ENCODE measurements at regions of chr5 and their contacts with region 1.

Region 1: GRCh38 chr5:142699184-142699720 is 13.4 kb upstream of the FGF1 start:
- DNase-seq: peak; percentile 66
- H3K4me3 ChIP-seq: no peak overlapping the region
- H3K27ac ChIP-seq: no peak overlapping the region
- H3K4me1 ChIP-seq: no peaks in the 10 kb centered on the region
- CTCF ChIP-seq: peak; percentile 94

Region 2: GRCh38 chr5:142151436-142152383 is 547.5 kb before region 1 on chr5:
- CTCF ChIA-PET with region 1: no interaction called
- POLR2A ChIA-PET with region 1: no interaction called
- intact Hi-C with region 1: loop called (anchors 1 kb)
- DNase-seq: peak; percentile 65
- H3K4me3 ChIP-seq: no peak overlapping the region
- H3K27ac ChIP-seq: peak overlapping the region; percentile 38
- H3K4me1 ChIP-seq: peaks cover 9% of the 10 kb centered on the region
- CTCF ChIP-seq: peak; percentile 100

Region 3: DNA sequence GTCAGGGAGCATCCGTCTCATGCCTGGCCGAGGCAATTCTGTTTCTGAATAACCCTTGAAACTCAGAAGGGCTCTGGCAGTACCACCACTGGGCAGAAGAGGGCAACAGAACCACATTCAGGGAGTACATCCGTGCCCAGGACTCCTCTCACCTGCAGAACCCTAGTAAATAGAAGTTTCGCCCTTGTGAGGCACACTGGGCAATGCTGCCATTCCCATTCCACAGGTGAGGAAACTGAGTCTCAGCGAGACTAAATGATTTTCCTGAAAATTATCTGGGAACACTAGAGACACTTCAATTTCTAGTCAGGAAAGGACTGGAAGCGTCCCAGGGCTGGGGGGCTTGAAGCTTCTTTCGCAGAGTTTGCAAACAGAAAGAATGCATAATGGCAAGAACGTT is 88.1 kb before region 1 on chr5:
- CTCF ChIA-PET with region 1: no interaction called
- POLR2A ChIA-PET with region 1: no interaction called
- intact Hi-C with region 1: loop called (anchors 1 kb)
- DNase-seq: peak; percentile 36
- H3K4me3 ChIP-seq: no peak overlapping the region
- H3K27ac ChIP-seq: no peak overlapping the region
- H3K4me1 ChIP-seq: no peaks in the 10 kb centered on the region
- CTCF ChIP-seq: peak; percentile 71

Region 4: DNA sequence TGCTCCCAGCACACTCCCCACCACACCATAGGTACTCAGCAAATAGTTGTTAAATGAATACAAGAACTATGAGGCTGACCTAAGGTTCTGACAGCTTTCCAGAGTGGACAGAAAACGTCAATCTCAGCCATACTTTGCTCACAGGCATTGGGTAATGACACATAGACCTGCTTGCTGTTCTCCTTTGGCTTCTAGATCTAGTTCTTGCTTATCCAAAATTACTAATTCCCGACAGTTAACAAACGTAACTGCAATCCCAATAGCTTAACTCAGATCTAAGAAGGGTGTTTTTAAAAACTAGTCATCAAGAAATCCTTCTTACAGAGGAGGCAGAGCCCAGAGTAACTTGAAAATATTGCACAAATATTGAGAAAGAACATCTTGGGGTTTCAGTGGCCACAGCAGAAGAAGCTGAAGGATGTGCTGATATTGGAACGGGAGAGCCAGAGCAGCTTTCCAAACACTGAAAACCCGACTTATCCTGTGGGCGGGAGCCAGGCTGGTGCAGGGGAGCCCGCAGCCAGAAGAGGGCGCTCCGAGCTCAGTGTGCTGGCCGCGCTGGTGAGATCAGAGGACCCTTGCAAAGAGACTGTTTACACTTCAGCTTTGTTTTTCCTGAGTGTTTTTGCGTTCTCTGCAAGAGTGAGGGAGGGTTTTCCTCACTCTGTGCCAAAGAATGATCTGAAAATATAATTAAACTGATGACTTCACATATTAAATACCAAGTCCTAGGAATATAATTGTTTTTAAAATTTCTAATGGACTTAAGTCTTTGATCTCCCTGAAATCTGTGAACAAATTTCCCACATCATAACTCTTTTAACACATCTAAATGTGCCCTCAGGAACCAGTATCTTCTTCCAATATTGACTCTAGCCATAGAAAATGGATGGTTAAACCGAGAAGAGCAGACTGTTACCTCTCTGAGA is 43.6 kb before region 1 on chr5:
- CTCF ChIA-PET with region 1: no interaction called
- POLR2A ChIA-PET with region 1: interaction called, 6 read pairs
- intact Hi-C with region 1: loop called (anchors 1 kb)
- DNase-seq: peak; percentile 62
- H3K4me3 ChIP-seq: no peak overlapping the region
- H3K27ac ChIP-seq: no peak overlapping the region
- H3K4me1 ChIP-seq: no peaks in the 10 kb centered on the region
- CTCF ChIP-seq: peak; percentile 98

Region 5: GRCh38 chr5:142674531-142675469 is 24.5 kb before region 1 on chr5:
- CTCF ChIA-PET with region 1: no interaction called
- POLR2A ChIA-PET with region 1: no interaction called
- intact Hi-C with region 1: no loop called
- DNase-seq: no peak
- H3K4me3 ChIP-seq: no peak overlapping the region
- H3K27ac ChIP-seq: no peak overlapping the region
- H3K4me1 ChIP-seq: no peaks in the 10 kb centered on the region
- CTCF ChIP-seq: no peak

Region 6: DNA sequence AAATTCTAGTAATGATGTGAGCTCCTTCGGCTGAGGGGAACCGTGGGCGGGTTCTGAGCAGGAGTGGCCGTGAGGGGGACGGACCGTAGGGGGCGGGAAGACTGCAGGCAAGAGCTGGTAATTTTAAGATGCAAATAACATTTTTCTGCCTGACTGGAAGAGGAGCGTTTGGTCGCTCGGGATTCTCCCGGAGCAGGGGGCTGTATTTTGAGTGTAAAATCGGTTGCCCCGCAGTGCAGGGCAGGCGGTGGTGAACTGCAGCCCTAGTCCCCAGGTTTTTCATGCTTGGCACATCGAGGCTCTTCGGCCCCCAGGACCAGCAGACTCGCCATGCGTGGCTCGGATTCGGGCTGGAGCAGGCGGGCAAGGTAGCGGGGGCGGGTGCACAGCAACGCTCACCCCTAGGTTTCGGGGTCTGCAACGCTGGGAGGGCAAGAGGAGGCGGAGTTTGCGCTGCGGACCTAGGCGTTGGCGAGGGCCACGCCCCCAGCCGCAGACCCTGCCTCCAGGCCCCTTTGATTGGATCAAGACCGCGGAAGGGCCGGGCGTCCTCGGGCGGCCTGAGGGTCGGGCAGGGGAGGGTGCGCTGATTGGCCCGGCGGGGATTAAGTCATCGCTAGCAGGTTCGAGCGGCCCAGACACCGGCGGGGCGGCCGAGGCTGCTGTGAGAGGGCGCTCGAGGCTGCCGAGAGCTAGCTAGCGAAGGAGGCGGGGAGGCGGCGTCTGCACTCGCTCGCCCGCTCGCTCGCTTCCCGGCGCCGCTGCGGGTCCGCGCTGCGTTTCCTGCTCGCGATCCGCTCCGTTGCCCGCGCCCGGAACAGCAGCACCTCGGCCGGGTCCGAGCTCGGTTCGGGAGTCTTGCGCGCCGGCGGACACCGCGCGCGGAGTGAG is 70.7 kb after region 1 on chr5 and contains the start of gene ARHGAP26:
- CTCF ChIA-PET with region 1: no interaction called
- POLR2A ChIA-PET with region 1: no interaction called
- intact Hi-C with region 1: no loop called
- DNase-seq: peak; percentile 96
- H3K4me3 ChIP-seq: peak within 1 kb of the TSS; percentile 76
- H3K27ac ChIP-seq: peak within 1 kb of the TSS; percentile 35
- H3K4me1 ChIP-seq: peaks cover 15% of the 10 kb centered on the region
- CTCF ChIP-seq: no peak
- total RNA-seq, gene ARHGAP26: 7.0 and 7.5 TPM in 2 replicates